PC-9 (cell line): ENCODE measurements at regions of chr14 and their contacts with region 1.

Region 1: DNA sequence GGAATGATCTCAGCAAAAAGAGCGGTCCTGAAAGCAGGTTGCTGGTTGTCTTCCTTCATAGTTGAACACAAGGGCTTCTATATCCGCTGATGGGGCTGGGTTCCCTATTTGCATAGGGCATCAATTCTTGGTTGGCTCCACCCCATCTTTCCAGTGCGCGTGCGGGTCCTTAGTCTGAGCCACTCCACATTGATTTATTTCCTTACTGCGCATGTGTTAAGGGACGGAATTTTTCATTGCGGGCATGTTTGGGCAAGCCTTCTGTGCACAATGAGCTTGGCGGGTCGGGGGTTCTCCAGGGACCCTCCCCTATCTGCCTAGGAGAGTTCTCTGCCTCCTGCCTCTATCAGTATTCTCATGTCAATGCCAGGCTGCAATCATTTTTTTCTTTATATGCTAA is 21.2 kb upstream of the DLGAP5 start:
- DNase-seq: no peak
- H3K4me3 ChIP-seq: no peak overlapping the region
- H3K27ac ChIP-seq: no peak overlapping the region
- H3K4me1 ChIP-seq: no peaks in the 10 kb centered on the region
- H3K27me3 ChIP-seq: no peaks in the 10 kb centered on the region
- CTCF ChIP-seq: no peak

Region 2: GRCh38 chr14:54857830-54858269 is 354.8 kb before region 1 on chr14:
- CTCF ChIA-PET with region 1: no interaction called
- POLR2A ChIA-PET with region 1: interaction called, 10 read pairs
- intact Hi-C with region 1: no loop called
- DNase-seq: no peak
- H3K4me3 ChIP-seq: no peak overlapping the region
- H3K27ac ChIP-seq: no peak overlapping the region
- H3K4me1 ChIP-seq: no peaks in the 10 kb centered on the region
- H3K27me3 ChIP-seq: no peaks in the 10 kb centered on the region
- CTCF ChIP-seq: no peak

Region 3: DNA sequence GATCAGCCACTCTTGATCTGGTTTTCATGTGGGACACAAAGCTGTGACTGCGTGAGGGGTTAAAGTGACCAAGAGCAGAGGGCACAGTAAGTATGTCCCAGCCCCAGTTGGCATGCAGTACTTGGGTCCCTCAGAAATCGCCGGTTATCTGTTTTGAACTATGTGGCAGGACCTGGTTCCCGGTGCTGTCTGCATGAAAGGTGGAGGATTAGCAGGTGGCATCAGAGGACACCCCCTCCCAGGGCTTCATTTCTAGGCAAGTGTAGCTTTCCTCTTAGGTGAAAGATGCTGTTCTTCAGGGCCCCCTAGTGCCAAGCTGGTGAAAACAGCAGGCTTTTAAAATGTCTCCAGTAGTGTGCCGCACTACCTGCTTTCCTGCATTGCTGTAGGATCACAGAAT is 141.9 kb after region 1 on chr14:
- CTCF ChIA-PET with region 1: no interaction called
- POLR2A ChIA-PET with region 1: no interaction called
- intact Hi-C with region 1: loop called (anchors 1 kb)
- DNase-seq: peak in 1 of 2 experiments; percentile 29
- H3K4me3 ChIP-seq: no peak overlapping the region
- H3K27ac ChIP-seq: no peak overlapping the region
- H3K4me1 ChIP-seq: no peaks in the 10 kb centered on the region
- H3K27me3 ChIP-seq: no peaks in the 10 kb centered on the region
- CTCF ChIP-seq: peak; percentile 64

Region 4: DNA sequence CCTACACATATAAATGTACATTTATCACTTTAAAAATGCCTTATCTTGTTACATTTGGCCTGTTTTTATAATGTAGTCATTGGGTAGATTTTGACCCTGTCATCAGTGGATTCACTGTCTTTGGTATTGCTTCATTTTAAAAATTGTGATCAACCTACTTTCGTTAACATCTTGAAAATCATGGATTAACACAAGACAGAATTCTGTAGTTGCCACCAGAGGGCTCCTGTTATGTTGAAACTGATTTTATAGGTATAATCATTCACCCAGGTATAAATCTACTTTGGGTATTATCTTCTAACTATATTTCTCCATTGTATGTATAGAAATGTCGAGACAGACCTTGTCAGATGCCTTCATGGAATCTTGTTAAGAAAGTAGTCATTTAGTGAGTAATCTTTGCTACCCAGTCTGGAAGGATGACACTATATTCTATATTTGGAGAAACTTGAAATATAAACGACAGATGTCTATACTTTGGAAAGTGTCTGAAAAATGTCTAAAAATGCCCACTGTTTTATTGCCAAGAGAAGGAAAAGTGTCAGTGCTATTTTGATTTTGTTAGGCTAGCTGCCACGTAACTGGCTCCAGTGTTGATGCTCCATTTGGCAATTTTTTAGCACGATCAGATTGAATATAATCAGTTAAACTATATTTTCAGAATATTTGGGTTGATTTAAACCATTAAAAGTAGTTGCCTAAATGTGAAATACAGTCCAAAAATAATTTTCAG is 1035.0 kb after region 1 on chr14:
- CTCF ChIA-PET with region 1: no interaction called
- POLR2A ChIA-PET with region 1: no interaction called
- intact Hi-C with region 1: no loop called
- DNase-seq: no peak
- H3K4me3 ChIP-seq: no peak overlapping the region
- H3K27ac ChIP-seq: no peak overlapping the region
- H3K4me1 ChIP-seq: 0 out of 2 replicates have a peak, but pooled peaks cover 7% of the 10 kb centered on the region
- H3K27me3 ChIP-seq: no peaks in the 10 kb centered on the region
- CTCF ChIP-seq: peak; percentile 61; the same call in 1 of the 2 replicates